ENCODE measurements at regions of chrX and their contacts with region 1.

Region 1: DNA sequence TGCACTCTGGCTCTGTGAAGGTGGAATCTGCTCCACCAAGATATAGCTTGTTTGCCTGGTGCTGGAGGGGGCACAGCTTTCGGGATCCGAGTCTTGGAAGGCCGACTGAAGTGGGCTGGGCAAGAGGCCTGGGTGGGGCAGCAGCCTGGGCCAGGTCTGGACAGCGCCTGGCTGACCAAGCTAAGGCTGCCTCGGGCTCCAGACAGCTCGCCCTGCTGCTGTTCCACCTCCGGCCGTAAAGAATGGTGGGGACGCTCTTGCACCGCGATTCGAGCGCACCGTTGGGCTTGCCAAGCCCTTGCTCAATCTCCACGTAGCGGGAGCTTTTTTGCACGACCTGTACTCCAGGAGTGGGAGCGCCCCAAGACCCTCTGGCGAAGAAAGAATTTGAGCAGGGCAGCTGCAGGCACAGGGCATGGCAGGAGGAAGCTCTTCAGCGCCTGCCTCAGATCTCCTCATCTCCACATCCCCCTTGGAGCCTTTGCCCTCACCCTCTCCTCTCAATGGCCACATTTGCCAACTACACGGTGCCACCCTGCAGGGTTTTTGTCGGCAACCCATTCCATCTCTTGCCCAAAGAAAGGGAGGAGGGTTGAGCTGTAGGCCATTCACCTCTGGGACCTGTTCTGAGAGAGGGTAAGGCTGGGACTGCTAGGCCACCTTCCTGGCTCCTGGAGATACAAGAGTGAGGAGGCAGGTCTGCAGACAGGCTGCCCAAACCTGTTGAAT is 18.9 kb downstream of the CNGA2 start:
- DNase-seq: no peak
- ATAC-seq: peak; percentile 98
- H3K4me3 ChIP-seq: no peak overlapping the region
- H3K27ac ChIP-seq: no peak overlapping the region
- H3K4me1 ChIP-seq: no peaks in the 10 kb centered on the region
- H3K27me3 ChIP-seq: no peaks in the 10 kb centered on the region; a peak in 1 of 4 replicates
- CTCF ChIP-seq: peak; percentile 75 to 83 (median 81)
- EP300 ChIP-seq: no peak
- POLR2A ChIP-seq: no peak
- RAD21 ChIP-seq: peak; percentile 81

Region 2: DNA sequence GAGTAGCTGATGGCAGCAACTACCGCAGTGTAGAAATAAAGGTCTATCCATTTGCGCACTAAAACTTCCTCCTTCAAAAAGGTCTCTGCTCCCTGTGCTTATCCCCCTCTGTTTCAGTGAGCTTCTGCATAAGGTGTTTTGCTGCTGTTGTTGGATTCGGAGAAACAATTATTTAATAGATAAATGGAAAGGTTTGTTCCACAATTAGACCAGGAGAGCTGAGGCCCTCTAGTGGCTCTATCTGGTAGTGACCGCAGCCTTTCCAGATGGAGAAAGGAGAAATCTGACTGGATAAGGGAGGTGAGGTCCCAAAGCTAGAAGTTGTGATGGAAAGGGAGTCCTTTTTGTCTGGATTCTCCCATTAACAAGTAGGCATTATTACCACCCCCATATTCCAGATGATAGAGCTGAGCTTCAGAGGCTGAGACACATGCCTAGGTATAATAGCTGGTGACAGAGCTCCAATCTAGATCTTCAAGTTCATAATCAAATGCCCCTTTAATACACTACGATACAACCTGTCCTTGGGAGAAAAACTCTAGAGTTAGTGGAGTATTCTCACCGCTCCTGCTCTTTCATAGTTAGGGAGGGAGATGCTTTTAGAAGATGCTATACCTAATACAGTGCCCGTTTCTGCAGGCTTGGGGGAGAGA is 879.1 kb after region 1 on chrX:
- CTCF ChIA-PET with region 1: interaction called, 55 read pairs
- POLR2A ChIA-PET with region 1: no interaction called
- RAD21 ChIA-PET with region 1: interaction called, 23 read pairs
- SMC1A ChIA-PET with region 1: interaction called, 8 read pairs
- in situ Hi-C with region 1: no loop called
- intact Hi-C with region 1: loop called (anchors 1 kb)
- DNase-seq: no peak
- ATAC-seq: peak; percentile 60
- H3K4me3 ChIP-seq: no peak overlapping the region
- H3K27ac ChIP-seq: no peak overlapping the region
- H3K4me1 ChIP-seq: no peaks in the 10 kb centered on the region
- H3K27me3 ChIP-seq: no peaks in the 10 kb centered on the region; a peak in 2 of 4 replicates
- CTCF ChIP-seq: peak; percentile 70 to 92 (median 80)
- EP300 ChIP-seq: no peak
- POLR2A ChIP-seq: no peak
- RAD21 ChIP-seq: peak; percentile 66

Region 3: DNA sequence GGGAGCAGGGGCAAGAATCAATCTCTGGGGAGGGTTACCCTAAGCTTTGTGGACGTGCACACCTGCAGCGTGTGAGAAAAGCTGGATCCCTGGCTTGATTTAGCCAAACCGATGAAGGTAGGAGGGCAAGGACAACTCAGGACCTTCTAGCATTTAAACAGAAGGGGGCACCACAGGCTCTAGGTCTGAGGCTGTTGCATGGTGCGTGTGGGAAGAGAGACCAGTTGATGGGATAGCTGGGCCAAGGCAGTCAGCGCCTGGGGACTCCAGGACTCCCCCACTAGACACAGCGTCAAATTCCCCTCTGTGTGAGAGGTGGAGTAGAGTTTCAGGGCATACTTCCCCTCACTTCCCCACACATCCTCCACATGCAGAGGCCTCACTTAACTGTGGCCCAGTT is 888.5 kb after region 1 on chrX:
- CTCF ChIA-PET with region 1: no interaction called
- POLR2A ChIA-PET with region 1: no interaction called
- RAD21 ChIA-PET with region 1: no interaction called
- SMC1A ChIA-PET with region 1: no interaction called
- in situ Hi-C with region 1: loop called (anchors 5 kb)
- intact Hi-C with region 1: no loop called
- DNase-seq: no peak
- ATAC-seq: peak; percentile 74
- H3K4me3 ChIP-seq: no peak overlapping the region
- H3K27ac ChIP-seq: no peak overlapping the region
- H3K4me1 ChIP-seq: no peaks in the 10 kb centered on the region; the same call in 1 of the 2 replicates
- H3K27me3 ChIP-seq: no peaks in the 10 kb centered on the region; a peak in 1 of 4 replicates
- CTCF ChIP-seq: peak in 2 of 3 experiments; percentile 22 to 36; a peak in 2 of 6 replicates
- EP300 ChIP-seq: no peak
- POLR2A ChIP-seq: no peak
- RAD21 ChIP-seq: peak; percentile 59

Region 4: GRCh38 chrX:152821145-152821765 is 1067.8 kb after region 1 on chrX:
- CTCF ChIA-PET with region 1: interaction called, 4 read pairs
- POLR2A ChIA-PET with region 1: no interaction called
- RAD21 ChIA-PET with region 1: interaction called, 3 read pairs
- SMC1A ChIA-PET with region 1: interaction called, 4 read pairs
- in situ Hi-C with region 1: loop called (anchors 5 kb)
- intact Hi-C with region 1: loop called (anchors 2 kb)
- DNase-seq: no peak
- ATAC-seq: peak; percentile 67
- H3K4me3 ChIP-seq: no peak overlapping the region
- H3K27ac ChIP-seq: no peak overlapping the region
- H3K4me1 ChIP-seq: no peaks in the 10 kb centered on the region
- H3K27me3 ChIP-seq: no peaks in the 10 kb centered on the region
- CTCF ChIP-seq: peak; percentile 60 to 69 (median 66)
- EP300 ChIP-seq: no peak
- POLR2A ChIP-seq: no peak
- RAD21 ChIP-seq: peak; percentile 50

Region 5: GRCh38 chrX:152926279-152926678 is 1172.8 kb after region 1 on chrX:
- CTCF ChIA-PET with region 1: no interaction called
- POLR2A ChIA-PET with region 1: no interaction called
- RAD21 ChIA-PET with region 1: no interaction called
- SMC1A ChIA-PET with region 1: no interaction called
- in situ Hi-C with region 1: loop called (anchors 10 kb)
- intact Hi-C with region 1: loop called (anchors 10 kb)
- DNase-seq: no peak
- ATAC-seq: peak; percentile 94
- H3K4me3 ChIP-seq: no peak overlapping the region
- H3K27ac ChIP-seq: no peak overlapping the region
- H3K4me1 ChIP-seq: no peaks in the 10 kb centered on the region; the same call in 1 of the 2 replicates
- H3K27me3 ChIP-seq: no peaks in the 10 kb centered on the region
- CTCF ChIP-seq: peak; percentile 51 to 60 (median 58); a peak in 5 of 6 replicates
- EP300 ChIP-seq: no peak
- POLR2A ChIP-seq: no peak
- RAD21 ChIP-seq: peak; percentile 53